ENCODE measurements at regions of chr9 and their contacts with region 1.

Region 1: DNA sequence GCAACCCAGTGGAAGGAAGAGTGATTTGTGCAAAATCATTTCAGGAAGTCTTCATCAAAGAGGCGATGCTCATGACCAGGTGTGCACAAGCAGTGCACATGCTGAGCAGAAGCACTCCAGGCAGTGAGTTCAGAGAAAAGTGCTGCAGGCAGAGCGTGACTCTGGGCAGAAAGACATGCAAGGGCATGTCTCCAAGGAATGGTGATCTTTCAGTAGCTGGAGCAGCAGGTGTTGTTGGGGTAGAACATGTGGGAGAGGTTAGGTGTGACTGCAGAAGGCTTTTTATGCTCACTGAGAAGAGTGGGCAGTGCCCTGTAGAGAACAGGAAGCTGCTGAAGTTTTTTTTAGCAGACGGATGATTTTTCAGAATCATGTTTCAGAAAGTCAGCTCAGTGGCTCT is 545.4 kb upstream of the TLE4 start:
- DNase-seq: no peak
- ATAC-seq: no peak

Region 2: GRCh38 chr9:79060771-79061170 is 34.5 kb after region 1 on chr9:
- intact Hi-C with region 1: loop called in 1 of 2 experiments (anchors 1 kb)
- DNase-seq: no peak
- ATAC-seq: no peak